ENCODE measurements at regions of chr3 and their contacts with region 1.

Region 1: GRCh38 chr3:43162230-43163084 is 56.6 kb upstream of the POMGNT2 start:
- DNase-seq: peak; percentile 60
- H3K4me3 Mint-ChIP-seq: peak overlapping the region; percentile 65
- H3K27ac Mint-ChIP-seq: peak overlapping the region; percentile 84
- H3K4me1 Mint-ChIP-seq: peaks cover 24% of the 10 kb centered on the region
- H3K27me3 Mint-ChIP-seq: no peaks in the 10 kb centered on the region

Region 2: GRCh38 chr3:43180027-43180426 is 17.6 kb after region 1 on chr3:
- CTCF ChIA-PET with region 1: interaction called, 7 read pairs
- POLR2A ChIA-PET with region 1: interaction called, 4 read pairs
- intact Hi-C with region 1: loop called (anchors 2 kb)
- DNase-seq: peak; percentile 54
- H3K4me3 Mint-ChIP-seq: no peak overlapping the region
- H3K27ac Mint-ChIP-seq: peak overlapping the region; percentile 54
- H3K4me1 Mint-ChIP-seq: peaks cover 37% of the 10 kb centered on the region
- H3K27me3 Mint-ChIP-seq: no peaks in the 10 kb centered on the region

Region 3: DNA sequence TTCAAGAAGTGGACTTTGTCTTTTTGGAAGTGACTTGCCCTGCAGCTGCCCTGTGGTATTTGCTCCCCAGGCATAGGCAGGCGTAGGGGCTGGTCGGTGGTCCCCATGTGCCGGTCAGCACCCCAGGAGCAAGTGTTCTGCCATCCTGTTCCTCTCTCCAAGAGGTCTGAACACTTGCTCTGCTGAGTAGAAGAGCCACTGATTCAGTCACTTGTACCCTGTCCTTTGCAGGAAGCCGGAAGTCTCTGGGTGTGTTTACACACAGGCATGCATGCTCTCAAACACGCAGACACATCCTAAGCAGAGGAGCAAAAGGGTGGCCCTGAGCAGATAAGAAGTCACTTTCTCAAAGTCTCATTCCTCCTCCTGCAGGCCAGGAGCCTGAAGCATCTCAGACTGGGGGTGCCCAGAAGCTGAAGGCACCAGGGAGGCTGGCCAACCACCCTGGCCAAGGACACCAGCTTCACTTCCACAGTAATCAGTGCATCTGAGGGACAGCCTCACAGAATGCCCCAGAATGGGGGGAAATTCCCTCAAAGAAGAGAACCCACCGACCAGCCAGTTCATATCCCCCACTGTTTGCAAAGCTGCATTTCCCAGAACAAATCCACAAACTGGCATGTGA is 32.1 kb after region 1 on chr3:
- CTCF ChIA-PET with region 1: interaction called, 3 read pairs
- POLR2A ChIA-PET with region 1: no interaction called
- intact Hi-C with region 1: loop called (anchors 1 kb)
- DNase-seq: peak; percentile 56
- H3K4me3 Mint-ChIP-seq: peak overlapping the region; percentile 16
- H3K27ac Mint-ChIP-seq: peak overlapping the region; percentile 86
- H3K4me1 Mint-ChIP-seq: peaks cover 69% of the 10 kb centered on the region
- H3K27me3 Mint-ChIP-seq: no peaks in the 10 kb centered on the region

Measured in activated CD4-positive, alpha-beta memory T cell treated with anti-CD3 and anti-CD28 coated beads for 36 hours (primary cell).